Naive thymus-derived CD8-positive, alpha-beta T cell (primary cell): ENCODE measurements at regions of chr20 and their contacts with region 1.

Region 1: DNA sequence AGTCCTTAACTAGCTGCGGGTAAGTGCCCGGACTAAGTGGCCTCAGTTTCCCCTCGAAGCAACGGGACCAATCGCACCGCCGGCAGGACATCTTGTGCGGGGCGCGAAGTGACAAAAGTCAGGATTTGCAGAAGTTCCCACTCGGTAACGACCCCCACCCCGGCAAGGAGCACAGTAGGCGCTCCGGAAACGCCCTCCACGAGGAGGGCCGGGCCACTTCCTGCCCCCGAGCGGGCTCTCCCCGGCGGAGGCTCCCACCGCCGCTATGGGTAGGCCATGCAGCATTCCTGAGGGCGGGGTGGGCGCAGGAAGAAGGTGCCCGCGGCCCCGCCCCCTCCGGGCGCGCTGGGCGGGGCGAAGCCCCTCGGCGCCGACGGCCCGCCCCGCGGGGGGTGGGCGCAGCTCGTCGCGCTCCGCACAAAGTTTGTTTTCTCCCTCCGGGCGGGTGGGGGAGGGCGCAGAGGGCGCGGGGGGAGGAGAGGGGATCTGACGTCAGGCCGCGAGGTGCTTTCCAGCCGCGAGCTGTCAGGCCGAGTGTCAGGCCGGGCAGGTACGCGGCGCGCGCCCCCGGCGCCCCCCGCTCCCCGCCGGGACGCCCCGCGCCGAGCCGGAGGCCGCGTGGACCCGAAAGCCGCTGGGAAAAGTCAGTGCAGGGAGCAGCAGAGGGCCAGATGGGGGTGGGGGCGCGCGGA is at the start of gene TGIF2:
- DNase-seq: peak; percentile 86 to 96 (median 95)
- ATAC-seq: peak; percentile 71 to 75
- H3K4me3 Mint-ChIP-seq: peak within 1 kb of the TSS; percentile 85 to 98 (median 95)
- H3K27ac Mint-ChIP-seq: peak within 1 kb of the TSS; percentile 98 to 100 (median 99)
- H3K4me1 Mint-ChIP-seq: peaks cover 25 to 54% (median 39%) of the 10 kb centered on the region in 4 donors
- H3K27me3 Mint-ChIP-seq: no peaks in the 10 kb centered on the region
- polyA plus RNA-seq, gene TGIF2: 25.7 to 36.8 (median 30.8) TPM

Region 2: DNA sequence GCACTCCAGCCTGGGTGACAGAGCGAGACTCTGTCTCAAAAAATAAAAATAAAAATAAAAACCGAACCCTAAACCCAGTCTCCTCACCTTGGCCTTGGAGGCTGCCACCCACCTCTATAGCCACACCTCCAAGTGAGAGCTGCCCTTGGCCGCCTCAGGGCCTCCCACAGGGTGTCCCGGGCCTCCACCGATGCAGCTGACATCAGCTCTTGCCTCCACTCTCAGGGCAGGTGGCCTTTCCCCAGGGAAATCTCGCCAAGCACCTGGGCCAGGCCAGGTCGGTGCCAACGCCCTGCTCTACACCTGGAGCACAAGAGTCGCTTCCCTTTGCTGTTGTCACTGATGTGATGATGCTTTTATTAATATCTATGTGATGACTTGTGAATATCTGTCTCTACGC is 40.9 kb before region 1 on chr20:
- POLR2A ChIA-PET with region 1: no interaction called
- DNase-seq: no peak
- ATAC-seq: no peak
- H3K4me3 Mint-ChIP-seq: no peak overlapping the region
- H3K27ac Mint-ChIP-seq: no peak overlapping the region
- H3K4me1 Mint-ChIP-seq: peaks cover 0 to 2% (median 0%) of the 10 kb centered on the region in 4 donors
- H3K27me3 Mint-ChIP-seq: no peaks in the 10 kb centered on the region

Region 3: DNA sequence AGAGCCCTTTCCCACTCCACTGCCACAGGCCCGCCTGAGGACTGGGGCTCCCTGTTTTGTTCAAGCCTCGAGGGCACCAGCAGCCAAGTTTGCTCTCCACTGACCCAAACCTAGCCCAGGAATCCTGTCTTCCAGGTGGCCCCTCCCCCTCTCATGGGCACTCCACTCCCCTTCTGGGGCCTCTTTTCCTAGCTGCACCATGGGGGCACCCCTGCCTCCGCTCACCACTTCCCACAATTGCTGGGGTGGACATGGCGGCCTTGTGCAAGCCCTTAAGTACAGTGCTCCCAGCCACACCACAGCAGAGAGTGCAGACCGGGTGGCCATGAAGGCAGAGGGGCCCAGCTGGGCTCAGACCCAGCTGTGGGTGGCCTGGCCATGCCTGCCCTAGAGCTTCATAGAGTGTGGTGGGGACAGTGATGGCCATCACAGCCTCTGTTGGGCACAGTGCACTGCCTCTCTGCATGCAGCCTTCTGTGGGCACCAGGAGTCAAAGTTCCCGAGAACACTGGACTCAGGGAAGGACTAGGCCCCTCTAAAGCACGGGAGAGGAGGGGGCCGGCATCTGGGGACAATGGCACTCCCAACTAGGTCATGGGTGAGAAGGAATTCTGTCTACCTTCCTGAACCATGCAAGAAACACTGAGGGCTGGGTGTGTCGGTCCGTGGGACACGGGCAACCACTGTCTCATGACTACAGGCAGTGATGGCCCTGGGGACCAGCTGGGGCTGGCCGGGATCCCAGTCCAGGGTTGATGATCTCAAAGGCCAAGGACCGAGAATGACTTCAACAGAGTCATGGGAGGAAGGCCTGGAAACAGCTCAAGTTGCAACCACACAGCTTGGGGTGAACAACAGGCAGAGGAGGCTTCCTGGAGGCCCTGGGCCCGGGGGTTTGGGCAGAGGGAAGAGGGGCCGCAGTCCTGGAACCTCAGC is 30.4 kb before region 1 on chr20:
- POLR2A ChIA-PET with region 1: no interaction called
- DNase-seq: no peak
- ATAC-seq: no peak
- H3K4me3 Mint-ChIP-seq: peak overlapping the region in 1 of 10 donors; percentile 26
- H3K27ac Mint-ChIP-seq: peak overlapping the region in 2 of 10 donors; percentile 54 to 72
- H3K4me1 Mint-ChIP-seq: peaks cover 2 to 8% (median 4%) of the 10 kb centered on the region in 4 donors
- H3K27me3 Mint-ChIP-seq: peaks cover 0 to 1% (median 0%) of the 10 kb centered on the region in 5 donors

Region 4: DNA sequence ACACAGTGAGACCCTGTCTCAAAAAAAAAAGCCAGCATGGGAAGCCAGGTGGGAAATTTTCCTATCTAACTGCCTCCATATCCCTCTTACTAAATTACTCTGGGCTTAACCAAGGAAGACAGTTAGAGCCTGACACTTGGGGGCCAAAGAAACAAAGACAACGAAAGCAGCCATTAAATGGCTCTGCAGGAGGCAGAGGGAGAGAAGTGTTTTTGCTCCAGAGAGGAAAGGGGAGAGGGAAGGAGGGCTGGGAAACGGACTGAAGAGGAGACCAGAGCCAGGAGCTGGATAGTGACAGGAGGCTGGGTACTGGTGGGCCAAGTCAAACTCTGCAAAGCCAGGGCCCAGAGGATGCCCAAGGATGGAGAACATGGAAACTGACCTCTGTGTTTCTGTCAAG is 10.5 kb before region 1 on chr20:
- POLR2A ChIA-PET with region 1: interaction called, 41 read pairs
- DNase-seq: peak in 1 of 10 donors; percentile 46
- ATAC-seq: no peak
- H3K4me3 Mint-ChIP-seq: peak overlapping the region in 1 of 10 donors; percentile 38
- H3K27ac Mint-ChIP-seq: peak overlapping the region in 3 of 10 donors; percentile 25 to 80 (median 57)
- H3K4me1 Mint-ChIP-seq: peaks cover 2 to 19% (median 10%) of the 10 kb centered on the region in 4 donors
- H3K27me3 Mint-ChIP-seq: no peaks in the 10 kb centered on the region

Region 5: GRCh38 chr20:36629719-36630681 is 56.8 kb after region 1 on chr20:
- POLR2A ChIA-PET with region 1: interaction called, 12 read pairs
- DNase-seq: peak in 9 of 10 donors; percentile 14 to 57 (median 40)
- ATAC-seq: peak; percentile 94 to 96
- H3K4me3 Mint-ChIP-seq: peak overlapping the region; percentile 60 to 91 (median 86)
- H3K27ac Mint-ChIP-seq: peak overlapping the region; percentile 93 to 99 (median 97)
- H3K4me1 Mint-ChIP-seq: peaks cover 25 to 71% (median 63%) of the 10 kb centered on the region in 4 donors
- H3K27me3 Mint-ChIP-seq: no peaks in the 10 kb centered on the region